T-cell (primary cell): ENCODE measurements at regions of chr19 and their contacts with region 1.

Region 1: DNA sequence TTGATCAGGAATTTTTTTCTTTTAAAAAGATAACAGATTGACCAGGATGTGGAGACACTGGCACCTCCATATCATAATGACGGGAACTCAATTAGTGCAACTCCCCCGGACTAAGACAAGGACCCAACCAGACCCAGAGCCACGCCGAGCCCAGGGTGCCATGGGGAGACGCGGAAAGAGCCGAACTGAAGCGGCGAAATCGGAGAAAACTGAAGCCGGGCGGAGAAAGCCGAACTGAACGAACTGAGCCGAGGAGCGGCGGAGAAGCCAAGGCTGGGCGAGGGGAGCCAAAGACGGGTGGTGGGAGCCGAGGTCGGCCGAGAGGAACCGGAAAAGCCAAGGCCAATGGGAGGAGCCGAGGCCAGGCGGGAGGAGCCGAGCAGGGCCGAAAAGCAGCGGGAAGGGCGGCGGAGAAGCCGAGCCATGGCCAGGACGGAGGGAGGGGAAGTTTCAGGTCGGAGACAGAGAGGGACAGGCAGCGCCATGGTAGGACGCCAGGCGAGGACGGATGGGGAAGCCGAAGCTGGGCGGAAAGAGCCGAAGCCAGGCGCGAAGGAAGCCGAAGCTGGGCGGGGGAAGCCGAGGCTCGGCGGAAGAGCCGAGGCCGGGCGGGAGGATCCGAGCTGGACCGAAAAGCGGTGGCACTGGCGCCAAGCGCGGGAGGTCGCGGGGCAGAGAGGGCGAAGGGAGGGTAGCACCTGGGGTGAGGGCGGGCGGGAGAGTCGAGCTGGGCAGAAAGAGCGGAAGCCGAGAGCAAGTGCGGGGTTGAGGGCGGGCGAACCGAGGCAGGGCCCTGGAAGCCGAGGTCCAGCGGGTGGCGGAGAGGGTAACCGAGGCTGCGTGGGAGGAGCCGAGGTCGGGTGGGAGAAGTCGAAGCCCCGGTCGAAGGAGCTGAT is 29.4 kb downstream of the ZNF557 start:
- DNase-seq: peak; percentile 70 to 93 (median 84)
- ATAC-seq: peak; percentile 91 to 96 (median 96)
- H3K4me3 ChIP-seq: peak overlapping the region; percentile 67 to 93
- H3K4me3 Mint-ChIP-seq: peak overlapping the region; percentile 88 to 92 (median 90)
- H3K27ac ChIP-seq: peak overlapping the region; percentile 91
- H3K27ac Mint-ChIP-seq: peak overlapping the region; percentile 88 to 94
- H3K4me1 ChIP-seq: peaks cover 3 to 22% of the 10 kb centered on the region in 2 experiments
- H3K4me1 Mint-ChIP-seq: peaks cover 28 to 35% (median 29%) of the 10 kb centered on the region in 3 donors
- H3K27me3 ChIP-seq: no peaks in the 10 kb centered on the region
- H3K27me3 Mint-ChIP-seq: no peaks in the 10 kb centered on the region

Region 2: GRCh38 chr19:7069042-7069903 is 29.7 kb before region 1 on chr19 and contains the start of gene ZNF557:
- CTCF ChIA-PET with region 1: interaction called in 1 of 2 experiments, 13 read pairs
- POLR2A ChIA-PET with region 1: interaction called, 4 to 7 read pairs
- DNase-seq: peak; percentile 95 to 100 (median 99)
- ATAC-seq: peak; percentile 95 to 98 (median 98)
- H3K4me3 ChIP-seq: peak within 1 kb of the TSS; percentile 86 to 98
- H3K4me3 Mint-ChIP-seq: peak within 1 kb of the TSS; percentile 94 to 99 (median 95)
- H3K27ac ChIP-seq: peak within 1 kb of the TSS; percentile 82
- H3K27ac Mint-ChIP-seq: peak within 1 kb of the TSS; percentile 89 to 94
- H3K4me1 ChIP-seq: peaks cover 6 to 20% of the 10 kb centered on the region in 2 experiments
- H3K4me1 Mint-ChIP-seq: peaks cover 11 to 33% (median 30%) of the 10 kb centered on the region in 3 donors
- H3K27me3 ChIP-seq: no peaks in the 10 kb centered on the region
- H3K27me3 Mint-ChIP-seq: no peaks in the 10 kb centered on the region
- total RNA-seq, gene ZNF557: 12.7 to 28.2 (median 24.6) TPM

Region 3: DNA sequence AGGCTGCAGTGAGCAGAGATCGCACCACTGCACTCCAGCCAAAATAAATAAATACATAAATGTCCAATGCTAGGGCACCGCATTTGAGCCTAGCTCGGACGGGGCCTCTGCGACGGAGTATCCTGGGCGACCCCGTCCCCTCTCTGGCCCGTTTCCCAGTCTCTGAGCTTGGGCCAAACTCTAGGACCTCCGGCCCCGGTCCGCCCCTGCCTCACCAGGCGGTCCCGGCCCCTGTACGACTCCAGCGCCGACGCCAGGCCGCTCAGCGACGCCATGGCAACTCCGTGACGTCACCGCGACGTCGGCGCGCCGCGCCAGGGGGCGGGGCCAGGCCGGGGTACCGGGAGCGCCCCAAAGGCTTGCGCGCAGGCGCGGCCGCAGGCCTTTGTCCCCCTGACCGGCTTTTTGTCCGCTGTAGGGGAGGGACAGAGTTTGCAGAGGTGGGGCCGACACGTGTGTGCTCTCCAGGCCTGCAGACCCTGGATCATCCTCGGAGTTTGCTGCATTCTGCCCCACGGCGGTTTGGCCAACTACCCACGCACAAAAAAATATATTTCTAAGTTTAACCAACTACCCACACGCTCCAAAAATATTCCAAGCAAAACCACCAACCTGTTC is 389.9 kb after region 1 on chr19 and contains the start of gene PEX11G:
- CTCF ChIA-PET with region 1: no interaction called
- POLR2A ChIA-PET with region 1: interaction called in 1 of 2 experiments, 14 read pairs
- DNase-seq: peak; percentile 73 to 94 (median 86)
- ATAC-seq: peak; percentile 92 to 99 (median 97)
- H3K4me3 ChIP-seq: peak within 1 kb of the TSS; percentile 63 to 89
- H3K4me3 Mint-ChIP-seq: peak within 1 kb of the TSS; percentile 78 to 83 (median 81)
- H3K27ac ChIP-seq: peak within 1 kb of the TSS; percentile 32
- H3K27ac Mint-ChIP-seq: peak within 1 kb of the TSS; percentile 55 to 88
- H3K4me1 ChIP-seq: peaks cover 5 to 18% of the 10 kb centered on the region in 2 experiments
- H3K4me1 Mint-ChIP-seq: peaks cover 10 to 24% (median 16%) of the 10 kb centered on the region in 3 donors
- H3K27me3 ChIP-seq: peaks cover 0 to 3% of the 10 kb centered on the region in 2 experiments
- H3K27me3 Mint-ChIP-seq: no peaks in the 10 kb centered on the region
- total RNA-seq, gene PEX11G: 0.35 to 1.1 (median 0.67) TPM in 4 of 5 donors, not detected in the other